ENCODE measurements at regions of chr12 and their contacts with region 1.

Region 1: DNA sequence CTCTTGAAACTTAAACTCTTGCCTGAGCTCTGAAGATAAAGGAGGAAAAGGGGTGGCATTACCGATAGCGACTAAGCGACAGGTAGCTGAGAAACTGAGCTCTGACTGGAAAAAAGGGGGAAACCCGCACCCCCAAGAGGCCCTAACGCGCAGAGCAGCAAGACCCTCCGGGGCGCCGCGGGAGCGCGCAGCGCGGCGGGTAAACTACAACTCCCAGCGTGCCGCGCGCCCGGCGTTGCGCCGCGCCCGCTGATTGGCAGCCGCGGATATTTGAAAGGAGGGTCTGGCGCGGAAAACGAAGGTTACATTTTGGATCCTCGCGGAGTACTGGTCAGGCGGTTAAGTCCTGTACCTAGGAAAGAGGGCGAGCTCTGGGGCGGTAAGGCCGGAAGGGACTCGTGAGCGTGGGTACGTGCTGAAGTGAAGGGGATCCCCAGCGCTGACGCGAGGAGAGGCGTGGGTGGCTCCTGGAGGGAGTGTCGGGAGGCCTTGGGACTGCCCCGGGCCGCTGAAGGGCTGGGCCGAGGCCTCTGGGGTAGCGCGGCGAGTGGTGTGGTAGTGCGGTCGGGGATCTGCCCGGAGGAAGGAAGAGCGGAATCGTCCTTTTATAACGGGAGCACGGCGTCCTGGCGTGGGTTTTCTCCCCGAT is at the start of gene ESPL1:
- DNase-seq: peak; percentile 93
- ATAC-seq: peak; percentile 95
- H3K4me3 Mint-ChIP-seq: peak within 1 kb of the TSS; percentile 98
- H3K27ac Mint-ChIP-seq: peak within 1 kb of the TSS; percentile 98
- H3K4me1 Mint-ChIP-seq: peaks cover 47% of the 10 kb centered on the region
- H3K27me3 Mint-ChIP-seq: no peaks in the 10 kb centered on the region
- total RNA-seq, gene ESPL1: 126 TPM

Region 2: DNA sequence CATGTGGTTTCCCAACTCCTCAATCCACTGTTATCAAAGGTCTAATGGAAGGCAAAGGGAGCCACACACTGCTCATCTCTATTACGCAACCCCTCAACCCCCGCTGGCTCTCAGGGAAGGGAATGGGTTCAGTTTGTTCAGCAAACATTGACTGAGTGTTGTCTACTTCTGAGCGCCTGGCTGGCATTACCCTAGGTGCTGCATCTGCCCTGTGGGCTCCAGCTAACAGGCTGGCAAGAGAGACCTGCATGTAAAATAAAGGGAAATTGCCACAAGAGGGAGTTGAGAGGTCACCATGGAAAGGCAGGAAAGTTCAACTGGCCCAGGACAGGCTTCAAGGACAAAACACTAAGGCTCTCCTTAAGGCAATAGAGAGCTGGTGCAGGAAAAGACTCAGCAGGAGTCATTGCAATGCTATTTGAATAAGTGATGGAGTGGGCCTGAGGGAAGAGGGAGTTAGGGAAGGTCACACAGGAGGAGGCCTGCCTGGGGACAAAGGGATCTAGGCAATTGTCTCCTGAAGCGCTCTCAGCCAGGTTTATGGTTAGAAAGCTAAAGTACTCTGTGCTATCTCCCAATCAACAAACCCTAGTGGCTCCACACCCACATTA is 93.1 kb before region 1 on chr12:
- CTCF ChIA-PET with region 1: interaction called, 26 read pairs
- POLR2A ChIA-PET with region 1: interaction called, 18 read pairs
- DNase-seq: no peak
- ATAC-seq: no peak
- H3K4me3 Mint-ChIP-seq: no peak overlapping the region
- H3K27ac Mint-ChIP-seq: no peak overlapping the region
- H3K4me1 Mint-ChIP-seq: peaks cover 13% of the 10 kb centered on the region
- H3K27me3 Mint-ChIP-seq: no peaks in the 10 kb centered on the region

Region 3: DNA sequence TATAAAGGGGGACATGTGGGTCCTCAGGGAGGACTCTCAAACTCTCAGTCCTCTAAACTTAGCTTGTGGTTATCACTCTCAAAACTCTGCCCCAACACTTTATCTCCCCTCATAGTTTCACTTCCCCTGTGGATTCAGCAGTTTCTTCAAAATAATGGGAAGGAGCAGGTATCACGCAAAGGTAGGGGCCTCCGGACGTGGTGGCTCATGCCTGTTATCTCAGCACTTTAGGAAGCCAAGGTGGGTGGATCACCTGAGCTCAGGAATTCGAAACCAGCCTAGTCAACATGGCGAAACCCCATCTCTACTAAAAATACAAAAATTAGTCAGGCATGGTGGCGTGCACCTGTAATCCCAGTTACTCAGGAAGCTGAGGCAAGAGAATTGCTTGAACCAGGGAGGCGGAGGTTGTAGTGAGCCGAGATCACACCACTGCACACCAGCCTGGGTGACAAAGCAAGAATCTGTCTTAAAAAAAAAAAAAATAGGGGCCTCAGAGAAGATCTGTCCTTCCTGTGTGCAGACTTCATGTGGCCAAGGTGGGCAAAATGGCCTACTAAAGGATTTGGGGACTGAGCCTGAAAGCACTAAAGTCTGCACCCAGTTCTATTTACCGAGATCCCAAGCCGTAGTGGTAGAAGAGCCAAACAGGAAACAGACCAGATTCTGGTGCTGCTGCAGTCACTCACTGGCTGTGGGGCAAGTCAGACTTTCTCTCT is 67.5 kb before region 1 on chr12:
- CTCF ChIA-PET with region 1: interaction called, 10 read pairs
- POLR2A ChIA-PET with region 1: interaction called, 6 read pairs
- DNase-seq: peak; percentile 57
- ATAC-seq: peak; percentile 44
- H3K4me3 Mint-ChIP-seq: peak overlapping the region; percentile 68
- H3K27ac Mint-ChIP-seq: peak overlapping the region; percentile 88
- H3K4me1 Mint-ChIP-seq: peaks cover 79% of the 10 kb centered on the region
- H3K27me3 Mint-ChIP-seq: no peaks in the 10 kb centered on the region

Region 4: GRCh38 chr12:53220801-53221202 is 47.3 kb before region 1 on chr12:
- CTCF ChIA-PET with region 1: interaction called, 401 read pairs
- POLR2A ChIA-PET with region 1: interaction called, 88 read pairs
- DNase-seq: peak; percentile 91
- ATAC-seq: peak; percentile 68
- H3K4me3 Mint-ChIP-seq: peak overlapping the region; percentile 97
- H3K27ac Mint-ChIP-seq: peak overlapping the region; percentile 90
- H3K4me1 Mint-ChIP-seq: peaks cover 78% of the 10 kb centered on the region
- H3K27me3 Mint-ChIP-seq: no peaks in the 10 kb centered on the region

Region 5: GRCh38 chr12:53251477-53252348 is 16.4 kb before region 1 on chr12:
- CTCF ChIA-PET with region 1: interaction called, 69 read pairs
- POLR2A ChIA-PET with region 1: interaction called, 18 read pairs
- DNase-seq: peak; percentile 74
- ATAC-seq: peak; percentile 87
- H3K4me3 Mint-ChIP-seq: peak overlapping the region; percentile 99
- H3K27ac Mint-ChIP-seq: peak overlapping the region; percentile 94
- H3K4me1 Mint-ChIP-seq: peaks cover 54% of the 10 kb centered on the region
- H3K27me3 Mint-ChIP-seq: peaks cover 3% of the 10 kb centered on the region

Region 6: DNA sequence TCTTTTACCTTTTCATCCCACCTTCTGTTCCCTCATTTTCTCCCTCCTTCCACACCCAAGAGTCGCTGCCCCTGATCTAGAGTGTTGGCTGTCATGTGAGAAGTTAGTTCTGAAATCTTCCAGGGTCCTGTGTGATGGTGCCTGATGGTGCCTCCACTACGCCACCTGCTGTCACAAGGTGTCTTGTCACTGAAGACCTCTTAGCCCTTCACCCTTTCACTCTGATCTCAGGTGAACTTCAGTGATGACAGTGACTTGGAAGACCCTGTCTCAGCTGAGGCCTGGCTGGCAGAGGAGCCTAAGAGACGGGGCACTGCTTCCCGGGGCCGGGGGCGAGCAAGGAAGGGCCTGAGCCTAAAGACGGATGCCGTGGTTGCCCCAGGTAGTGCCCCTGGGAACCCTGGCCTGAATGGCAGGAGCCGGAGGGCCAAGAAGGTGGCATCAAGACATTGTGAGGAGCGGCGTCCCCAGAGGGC is 19.7 kb after region 1 on chr12:
- CTCF ChIA-PET with region 1: interaction called, 33 read pairs
- POLR2A ChIA-PET with region 1: interaction called, 9 read pairs
- DNase-seq: peak; percentile 74
- ATAC-seq: peak; percentile 86
- H3K4me3 Mint-ChIP-seq: no peak overlapping the region
- H3K27ac Mint-ChIP-seq: peak overlapping the region; percentile 22
- H3K4me1 Mint-ChIP-seq: peaks cover 4% of the 10 kb centered on the region
- H3K27me3 Mint-ChIP-seq: no peaks in the 10 kb centered on the region

Region 7: GRCh38 chr12:53308276-53308675 is 40.2 kb after region 1 on chr12:
- CTCF ChIA-PET with region 1: no interaction called
- POLR2A ChIA-PET with region 1: no interaction called
- DNase-seq: no peak
- ATAC-seq: no peak
- H3K4me3 Mint-ChIP-seq: no peak overlapping the region
- H3K27ac Mint-ChIP-seq: peak overlapping the region; percentile 24
- H3K4me1 Mint-ChIP-seq: peaks cover 3% of the 10 kb centered on the region
- H3K27me3 Mint-ChIP-seq: no peaks in the 10 kb centered on the region

Measured in activated CD8-positive, alpha-beta T cell treated with anti-CD3 and anti-CD28 coated beads, Interleukin-2, amount 10 ng/mL, durations not matched to agents 7 days and 5 days (primary cell).